ENCODE measurements at regions of chr5 and their contacts with region 1.

Region 1: DNA sequence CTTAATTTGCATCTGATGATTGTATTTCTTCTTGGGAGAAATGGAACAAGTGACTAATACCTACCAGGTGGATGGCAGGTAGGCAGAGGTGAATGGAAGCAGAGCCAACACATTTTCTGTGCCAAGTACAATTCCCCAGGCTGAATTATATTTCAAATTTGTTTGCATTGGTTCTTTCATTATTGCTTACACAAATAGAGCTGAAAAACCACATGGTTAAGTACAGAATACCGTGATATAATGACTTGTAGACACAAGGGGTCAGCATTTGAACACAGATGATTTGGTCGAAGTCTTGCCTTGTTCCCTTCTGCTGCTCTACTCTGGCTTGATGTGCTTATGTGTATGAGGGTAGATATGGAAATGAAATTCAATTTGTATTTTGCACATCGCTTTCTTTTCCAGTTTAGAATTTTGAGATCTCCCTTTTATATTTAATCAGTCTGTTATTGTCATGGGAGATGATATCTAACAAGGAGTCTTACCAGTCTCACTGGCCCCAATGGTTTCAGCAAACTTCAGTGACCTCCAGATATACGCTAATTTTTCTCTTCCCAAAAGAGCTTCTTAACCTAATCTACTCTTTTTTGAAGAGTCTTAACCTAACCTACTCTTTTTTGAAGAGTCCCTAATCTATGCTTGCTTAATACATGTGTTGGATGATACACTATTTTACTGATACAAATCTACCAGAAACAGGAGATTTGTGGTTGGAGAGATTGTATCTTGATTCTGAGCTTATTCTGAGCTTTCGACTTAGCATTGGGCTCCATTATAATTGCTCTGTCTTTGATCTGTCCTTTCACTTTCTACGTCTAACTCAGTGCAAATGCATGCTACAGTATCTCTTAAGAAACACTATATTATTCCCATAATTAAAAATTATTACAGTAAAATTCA is 88.1 kb downstream of the PCSK1 start:
- DNase-seq: peak in 4 of 5 donors; percentile 64 to 76 (median 68)
- H3K4me3 ChIP-seq: no peak overlapping the region
- H3K4me3 Mint-ChIP-seq: peak overlapping the region; percentile 10 to 60 (median 43)
- H3K27ac ChIP-seq: no peak overlapping the region
- H3K27ac Mint-ChIP-seq: peak overlapping the region in 6 of 7 donors; percentile 4 to 66 (median 19)
- H3K4me1 ChIP-seq: peaks cover 17% of the 10 kb centered on the region
- H3K4me1 Mint-ChIP-seq: peaks cover 12 to 18% (median 14%) of the 10 kb centered on the region in 4 donors
- H3K27me3 ChIP-seq: peaks cover 7% of the 10 kb centered on the region
- H3K27me3 Mint-ChIP-seq: peaks cover 7 to 9% of the 10 kb centered on the region in 2 donors

Region 2: GRCh38 chr5:96235008-96235910 is 109.7 kb before region 1 on chr5:
- CTCF ChIA-PET with region 1: no interaction called
- POLR2A ChIA-PET with region 1: no interaction called
- intact Hi-C with region 1: no loop called
- DNase-seq: no peak
- H3K4me3 ChIP-seq: no peak overlapping the region
- H3K4me3 Mint-ChIP-seq: no peak overlapping the region
- H3K27ac ChIP-seq: no peak overlapping the region
- H3K27ac Mint-ChIP-seq: no peak overlapping the region
- H3K4me1 ChIP-seq: no peaks in the 10 kb centered on the region
- H3K4me1 Mint-ChIP-seq: no peaks in the 10 kb centered on the region
- H3K27me3 ChIP-seq: no peaks in the 10 kb centered on the region
- H3K27me3 Mint-ChIP-seq: peaks cover 0 to 1% of the 10 kb centered on the region in 2 donors

Region 3: DNA sequence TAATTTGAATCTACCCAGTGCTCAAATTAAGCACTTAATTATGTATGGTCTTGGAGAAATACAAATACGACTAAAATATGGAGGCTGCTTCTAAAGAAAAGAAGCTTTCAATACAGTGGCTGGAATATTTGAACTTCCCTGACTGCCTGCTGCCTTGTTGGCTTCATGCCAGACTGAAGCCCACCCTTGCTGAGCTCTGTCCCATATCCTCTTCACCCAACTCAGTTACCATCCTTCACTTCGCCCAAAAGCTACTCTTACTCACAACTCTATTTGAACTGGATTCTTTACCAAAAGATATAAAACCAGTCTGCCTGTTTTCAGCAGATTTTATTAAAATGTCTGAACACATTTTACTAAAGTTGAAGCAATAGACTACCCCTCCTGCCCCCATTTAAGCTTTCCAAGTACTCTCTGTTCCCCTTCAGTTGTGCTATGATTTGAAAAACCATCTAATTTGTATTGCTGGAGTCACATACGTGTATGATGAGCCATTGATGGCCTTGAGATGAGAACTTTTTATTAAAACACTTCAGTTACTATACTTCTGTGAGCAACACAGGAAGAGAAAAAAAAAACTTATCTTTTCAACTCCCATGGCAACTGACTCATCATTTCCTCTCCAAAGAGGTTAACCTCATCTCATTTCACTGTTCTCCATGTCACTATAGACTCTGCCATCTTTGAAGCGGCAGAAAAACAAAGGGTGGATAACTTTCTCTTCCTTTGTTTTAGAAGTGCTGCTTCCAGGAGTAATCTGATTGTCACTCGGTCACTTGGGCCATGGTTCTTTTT is 192.3 kb after region 1 on chr5:
- CTCF ChIA-PET with region 1: interaction called, 5 read pairs
- POLR2A ChIA-PET with region 1: interaction called, 3 read pairs
- intact Hi-C with region 1: loop called (anchors 2 kb)
- DNase-seq: peak; percentile 48 to 83 (median 75)
- H3K4me3 ChIP-seq: peak overlapping the region in 1 of 2 donors; percentile 1
- H3K4me3 Mint-ChIP-seq: peak overlapping the region; percentile 18 to 93 (median 76)
- H3K27ac ChIP-seq: peak overlapping the region; percentile 38
- H3K27ac Mint-ChIP-seq: peak overlapping the region; percentile 83 to 100 (median 94)
- H3K4me1 ChIP-seq: peaks cover 30% of the 10 kb centered on the region
- H3K4me1 Mint-ChIP-seq: peaks cover 23 to 41% (median 30%) of the 10 kb centered on the region in 4 donors
- H3K27me3 ChIP-seq: no peaks in the 10 kb centered on the region
- H3K27me3 Mint-ChIP-seq: no peaks in the 10 kb centered on the region

Region 4: GRCh38 chr5:96548947-96549346 is 204.0 kb after region 1 on chr5:
- CTCF ChIA-PET with region 1: interaction called, 17 read pairs
- POLR2A ChIA-PET with region 1: no interaction called
- intact Hi-C with region 1: no loop called
- DNase-seq: no peak
- H3K4me3 ChIP-seq: no peak overlapping the region
- H3K4me3 Mint-ChIP-seq: no peak overlapping the region
- H3K27ac ChIP-seq: no peak overlapping the region
- H3K27ac Mint-ChIP-seq: peak overlapping the region in 1 of 7 donors; percentile 38
- H3K4me1 ChIP-seq: no peaks in the 10 kb centered on the region
- H3K4me1 Mint-ChIP-seq: peaks cover 3 to 10% (median 7%) of the 10 kb centered on the region in 4 donors
- H3K27me3 ChIP-seq: no peaks in the 10 kb centered on the region
- H3K27me3 Mint-ChIP-seq: peaks cover 0 to 8% of the 10 kb centered on the region in 2 donors

Region 5: DNA sequence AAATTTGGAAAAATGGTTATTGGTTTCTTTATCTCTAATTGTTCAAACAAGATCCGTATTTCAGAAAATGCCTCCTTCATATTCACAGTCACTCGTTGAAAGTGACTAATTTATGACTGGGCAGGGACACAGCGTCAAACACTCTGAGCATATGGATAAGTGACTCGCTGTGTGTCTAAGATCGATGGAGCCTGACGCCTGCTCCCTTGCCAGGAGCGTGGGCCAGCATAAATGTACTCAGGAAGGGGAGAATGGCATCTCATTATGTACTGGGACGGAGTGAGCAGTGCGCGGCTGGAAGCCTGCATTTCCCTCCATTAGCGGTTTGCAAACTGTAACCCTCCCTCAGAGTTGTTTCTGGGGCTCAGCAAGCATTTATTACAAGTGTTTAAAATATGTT is 237.4 kb after region 1 on chr5:
- CTCF ChIA-PET with region 1: interaction called, 13 read pairs
- POLR2A ChIA-PET with region 1: interaction called, 3 read pairs
- intact Hi-C with region 1: no loop called
- DNase-seq: no peak
- H3K4me3 ChIP-seq: no peak overlapping the region
- H3K4me3 Mint-ChIP-seq: no peak overlapping the region
- H3K27ac ChIP-seq: no peak overlapping the region
- H3K27ac Mint-ChIP-seq: no peak overlapping the region
- H3K4me1 ChIP-seq: peaks cover 6% of the 10 kb centered on the region
- H3K4me1 Mint-ChIP-seq: peaks cover 6 to 13% (median 10%) of the 10 kb centered on the region in 4 donors
- H3K27me3 ChIP-seq: no peaks in the 10 kb centered on the region
- H3K27me3 Mint-ChIP-seq: peaks cover 7 to 10% of the 10 kb centered on the region in 2 donors

Region 6: DNA sequence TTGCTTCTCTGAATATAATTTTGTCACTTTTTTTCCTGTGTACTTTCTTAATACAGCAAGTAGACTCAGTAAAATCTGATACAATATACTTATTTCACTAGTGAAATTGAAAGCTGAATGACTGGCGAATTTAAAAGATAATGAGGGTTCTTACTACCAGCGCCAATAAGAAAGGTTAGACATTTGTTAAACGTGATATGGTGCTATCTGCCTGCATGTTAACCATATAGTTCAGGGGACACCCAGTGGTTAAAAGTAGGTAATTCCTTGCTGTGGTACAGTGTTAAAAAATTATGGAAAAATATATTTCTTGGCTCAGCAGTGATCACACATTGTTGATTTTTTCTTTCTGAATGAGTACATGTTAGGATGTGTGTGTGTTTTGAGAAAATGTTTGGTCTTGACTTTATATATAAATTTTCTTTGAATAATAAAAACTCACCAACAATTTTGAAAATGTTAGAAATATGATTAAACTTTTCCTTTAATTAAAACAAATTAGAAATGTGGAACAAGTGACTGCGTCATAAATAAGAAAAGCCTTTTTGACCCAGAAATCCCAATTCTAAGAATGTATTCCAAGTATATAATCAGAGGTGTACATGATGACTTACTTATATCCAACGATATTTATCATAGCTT is 343.0 kb after region 1 on chr5:
- CTCF ChIA-PET with region 1: interaction called, 5 read pairs
- POLR2A ChIA-PET with region 1: no interaction called
- intact Hi-C with region 1: loop called (anchors 2 kb)
- DNase-seq: peak; percentile 27 to 39 (median 33)
- H3K4me3 ChIP-seq: no peak overlapping the region
- H3K4me3 Mint-ChIP-seq: peak overlapping the region in 1 of 8 donors; percentile 70
- H3K27ac ChIP-seq: no peak overlapping the region
- H3K27ac Mint-ChIP-seq: peak overlapping the region in 4 of 7 donors; percentile 4 to 46 (median 30)
- H3K4me1 ChIP-seq: peaks cover 17% of the 10 kb centered on the region
- H3K4me1 Mint-ChIP-seq: peaks cover 22 to 55% (median 32%) of the 10 kb centered on the region in 4 donors
- H3K27me3 ChIP-seq: no peaks in the 10 kb centered on the region
- H3K27me3 Mint-ChIP-seq: no peaks in the 10 kb centered on the region

Region 7: DNA sequence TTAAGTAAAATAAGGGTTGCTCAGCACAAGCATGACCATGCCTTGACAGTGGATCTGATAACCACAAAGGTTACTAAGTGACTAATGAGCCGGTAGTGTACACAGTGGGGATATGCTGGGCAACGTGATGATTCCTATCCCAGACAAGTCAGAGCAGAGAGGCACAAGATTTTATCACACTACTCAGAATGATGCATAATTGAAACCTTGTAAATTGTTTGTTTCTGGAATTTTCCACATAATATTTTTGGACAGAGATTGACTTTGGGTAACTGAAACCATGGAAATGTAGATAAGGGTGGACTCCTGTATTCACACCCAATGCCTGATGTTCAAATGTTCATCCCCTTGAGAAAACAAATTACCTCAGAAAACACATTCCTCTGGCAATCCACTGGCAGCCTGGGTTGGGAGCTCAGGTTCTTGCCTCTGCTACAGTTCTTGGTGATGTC is 479.0 kb after region 1 on chr5:
- CTCF ChIA-PET with region 1: no interaction called
- POLR2A ChIA-PET with region 1: no interaction called
- intact Hi-C with region 1: loop called (anchors 5 kb)
- DNase-seq: peak in 1 of 5 donors; percentile 35
- H3K4me3 ChIP-seq: no peak overlapping the region
- H3K4me3 Mint-ChIP-seq: peak overlapping the region in 1 of 8 donors; percentile 4
- H3K27ac ChIP-seq: no peak overlapping the region
- H3K27ac Mint-ChIP-seq: peak overlapping the region in 3 of 7 donors; percentile 14 to 83 (median 49)
- H3K4me1 ChIP-seq: peaks cover 28% of the 10 kb centered on the region
- H3K4me1 Mint-ChIP-seq: peaks cover 31 to 46% (median 38%) of the 10 kb centered on the region in 4 donors
- H3K27me3 ChIP-seq: no peaks in the 10 kb centered on the region
- H3K27me3 Mint-ChIP-seq: peaks cover 0 to 2% of the 10 kb centered on the region in 2 donors

Measured in CD4-positive, alpha-beta memory T cell (primary cell).